ENCODE measurements at regions of chr12 and their contacts with region 1.

Region 1: DNA sequence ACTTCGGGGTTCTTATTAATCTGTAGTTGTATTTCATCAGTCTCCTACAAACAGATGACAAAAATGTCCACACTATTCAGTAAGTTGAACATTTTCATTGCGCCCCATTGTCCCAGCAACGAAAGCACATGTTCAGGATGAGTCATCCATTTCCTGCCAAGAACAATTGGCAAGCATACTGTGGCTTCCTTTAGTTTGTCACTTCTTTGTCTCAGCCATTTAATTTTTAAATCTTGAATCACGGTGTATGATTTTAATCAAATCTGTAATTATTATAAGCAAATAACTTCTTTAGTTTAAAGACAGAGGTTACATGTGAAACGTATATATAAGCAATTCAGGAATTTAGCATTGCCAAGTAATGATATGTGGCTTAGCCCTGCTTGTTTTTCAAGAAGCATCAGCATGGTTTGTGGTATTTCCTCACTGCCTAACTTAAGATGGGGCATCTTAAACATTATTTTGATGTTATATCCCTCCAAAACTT is 211.3 kb upstream of the KRR1 start:
- DNase-seq: peak; percentile 96
- H3K4me3 ChIP-seq: no peak overlapping the region
- H3K27ac ChIP-seq: peak overlapping the region; percentile 92
- H3K4me1 ChIP-seq: peaks cover 73% of the 10 kb centered on the region
- H3K27me3 ChIP-seq: no peaks in the 10 kb centered on the region
- CTCF ChIP-seq: no peak

Region 2: DNA sequence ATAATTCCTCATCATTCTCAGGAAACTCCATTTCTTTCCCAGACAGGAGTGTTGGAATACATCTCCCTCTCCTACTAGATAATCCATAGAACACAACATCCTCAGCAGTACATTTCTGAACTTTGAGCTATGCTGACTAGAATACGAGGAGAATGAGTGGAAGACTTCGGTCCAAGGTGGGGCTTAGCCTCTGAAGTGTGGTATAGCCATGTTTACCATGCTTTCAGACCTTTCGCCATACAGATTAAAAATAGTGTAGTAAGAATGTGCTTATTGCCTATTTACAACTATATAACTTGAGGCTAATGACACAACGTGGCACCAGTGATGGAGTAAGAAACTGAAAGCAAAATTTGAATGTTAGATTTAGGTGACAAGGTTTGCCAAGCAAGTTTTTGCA is 26.8 kb before region 1 on chr12:
- CTCF ChIA-PET with region 1: interaction called, 10 read pairs
- POLR2A ChIA-PET with region 1: no interaction called
- intact Hi-C with region 1: no loop called
- DNase-seq: no peak
- H3K4me3 ChIP-seq: no peak overlapping the region
- H3K27ac ChIP-seq: no peak overlapping the region
- H3K4me1 ChIP-seq: no peaks in the 10 kb centered on the region
- H3K27me3 ChIP-seq: no peaks in the 10 kb centered on the region
- CTCF ChIP-seq: no peak

Region 3: DNA sequence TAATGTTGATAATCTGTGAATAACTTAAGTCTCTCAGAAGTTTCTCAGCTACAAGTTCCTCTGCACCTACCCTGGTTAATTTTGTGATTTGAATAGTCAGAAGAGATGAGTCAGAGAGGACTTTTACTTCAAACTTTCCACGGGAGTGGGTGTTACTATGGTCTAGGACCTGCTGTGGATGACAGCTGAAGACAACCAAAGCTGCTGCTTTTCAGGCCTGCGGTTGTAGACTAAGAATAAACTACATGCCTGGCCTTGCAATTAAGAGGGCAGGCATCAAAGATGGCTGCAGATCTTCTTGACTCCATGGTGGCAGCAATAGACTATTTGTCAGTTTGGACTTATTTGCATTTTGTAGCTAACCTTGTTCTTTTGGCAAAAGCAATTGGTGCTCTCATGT is 15.7 kb after region 1 on chr12:
- CTCF ChIA-PET with region 1: no interaction called
- POLR2A ChIA-PET with region 1: no interaction called
- intact Hi-C with region 1: no loop called
- DNase-seq: no peak
- H3K4me3 ChIP-seq: no peak overlapping the region
- H3K27ac ChIP-seq: no peak overlapping the region
- H3K4me1 ChIP-seq: peaks cover 11% of the 10 kb centered on the region
- H3K27me3 ChIP-seq: no peaks in the 10 kb centered on the region
- CTCF ChIP-seq: no peak

Region 4: DNA sequence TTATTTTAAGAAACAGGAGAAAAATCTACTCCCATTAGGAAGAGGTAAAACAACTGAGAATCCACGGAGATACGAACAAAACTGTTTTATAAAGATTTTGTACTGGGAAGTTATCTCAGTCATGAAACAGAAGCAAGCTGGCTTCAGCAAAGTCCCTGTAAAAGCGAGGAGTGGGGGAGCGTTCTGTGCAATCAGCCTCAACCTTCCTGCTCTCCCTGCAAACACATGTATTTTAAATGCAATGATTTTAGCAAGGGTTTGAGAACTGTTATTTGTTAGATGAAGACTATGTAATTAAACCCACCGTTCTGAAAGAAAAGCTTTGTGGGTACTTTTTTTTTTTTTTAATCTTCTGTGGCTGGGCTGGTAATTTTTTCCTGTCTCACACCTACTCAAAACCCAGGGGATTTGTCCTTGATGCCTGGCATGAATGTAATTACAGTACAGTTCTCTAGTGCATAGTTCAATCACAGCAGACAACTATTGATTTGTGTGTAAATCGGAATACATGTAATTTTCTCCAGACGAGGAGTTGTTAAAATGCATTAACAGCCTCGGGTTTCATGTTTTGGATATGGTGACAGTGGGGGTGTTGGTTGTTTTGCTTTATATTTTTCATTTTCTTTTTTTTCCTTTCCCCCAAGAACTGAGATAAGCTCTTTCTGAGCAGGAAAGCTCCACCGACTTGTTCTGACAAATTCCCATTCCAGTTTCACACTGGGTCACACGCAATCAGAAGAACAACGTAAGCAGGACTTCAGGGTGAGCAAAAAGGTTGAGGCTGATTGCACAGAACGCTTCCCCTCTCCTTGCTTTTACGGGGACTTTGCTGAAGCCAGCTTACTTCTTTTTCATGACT is 155.2 kb after region 1 on chr12:
- CTCF ChIA-PET with region 1: no interaction called
- POLR2A ChIA-PET with region 1: no interaction called
- intact Hi-C with region 1: no loop called
- DNase-seq: peak; percentile 37
- H3K4me3 ChIP-seq: no peak overlapping the region
- H3K27ac ChIP-seq: no peak overlapping the region
- H3K4me1 ChIP-seq: peaks cover 15% of the 10 kb centered on the region
- H3K27me3 ChIP-seq: no peaks in the 10 kb centered on the region
- CTCF ChIP-seq: no peak

Region 5: DNA sequence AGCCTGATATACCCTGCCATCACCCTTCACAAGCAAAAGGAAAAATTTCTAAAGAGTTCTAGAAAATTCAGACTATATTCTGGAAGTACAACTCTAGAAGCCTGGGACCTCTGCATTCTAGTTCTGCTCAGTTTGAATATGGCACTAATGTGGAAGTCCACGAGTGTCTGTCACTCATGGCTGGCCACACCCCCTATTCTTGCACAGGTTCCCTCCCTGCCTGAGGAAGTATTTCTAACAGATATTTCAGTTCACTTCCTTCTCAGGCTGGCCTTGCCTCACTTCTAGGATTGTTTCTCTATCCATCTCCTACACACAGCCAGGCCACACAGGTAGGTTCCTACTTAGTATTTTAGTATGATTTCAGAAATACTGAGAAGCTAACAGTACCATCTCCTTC is 241.4 kb after region 1 on chr12:
- CTCF ChIA-PET with region 1: no interaction called
- POLR2A ChIA-PET with region 1: no interaction called
- intact Hi-C with region 1: loop called (anchors 10 kb)
- DNase-seq: no peak
- H3K4me3 ChIP-seq: no peak overlapping the region
- H3K27ac ChIP-seq: no peak overlapping the region
- H3K4me1 ChIP-seq: peaks cover 9% of the 10 kb centered on the region
- H3K27me3 ChIP-seq: no peaks in the 10 kb centered on the region
- CTCF ChIP-seq: no peak